Naive thymus-derived CD4-positive, alpha-beta T cell (primary cell): ENCODE measurements at regions of chr7 and their contacts with region 1.

Region 1: DNA sequence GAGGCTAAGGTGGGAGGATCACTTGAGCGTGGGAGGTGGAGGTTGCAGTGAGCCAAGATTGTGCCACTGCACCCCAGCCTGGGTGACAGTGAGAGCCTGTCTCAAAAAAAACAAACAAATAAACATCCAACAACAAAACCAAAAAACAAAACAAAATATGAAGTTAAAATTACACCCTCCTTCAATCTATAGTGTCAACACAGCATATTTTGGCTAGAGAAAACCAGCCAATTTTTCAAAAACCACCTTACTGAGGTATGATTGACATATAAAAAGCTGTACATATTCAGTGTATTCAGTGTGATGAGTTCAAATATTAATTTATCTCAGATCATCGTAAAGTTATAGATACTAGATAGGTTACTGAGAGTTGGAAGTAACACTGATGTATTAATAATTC is 102.4 kb downstream of the ICA1 start:
- DNase-seq: no peak
- ATAC-seq: no peak
- H3K4me3 ChIP-seq: no peak overlapping the region
- H3K4me3 Mint-ChIP-seq: no peak overlapping the region
- H3K27ac ChIP-seq: no peak overlapping the region
- H3K27ac Mint-ChIP-seq: no peak overlapping the region
- H3K4me1 ChIP-seq: no peaks in the 10 kb centered on the region
- H3K4me1 Mint-ChIP-seq: peaks cover 0 to 12% (median 3%) of the 10 kb centered on the region in 7 donors
- H3K27me3 ChIP-seq: no peaks in the 10 kb centered on the region
- H3K27me3 Mint-ChIP-seq: peaks cover 0 to 4% (median 0%) of the 10 kb centered on the region in 5 donors

Region 2: GRCh38 chr7:8042796-8043535 is 116.6 kb before region 1 on chr7:
- CTCF ChIA-PET with region 1: no interaction called
- POLR2A ChIA-PET with region 1: no interaction called
- intact Hi-C with region 1: no loop called
- DNase-seq: no peak
- ATAC-seq: no peak
- H3K4me3 ChIP-seq: no peak overlapping the region
- H3K4me3 Mint-ChIP-seq: no peak overlapping the region
- H3K27ac ChIP-seq: no peak overlapping the region
- H3K27ac Mint-ChIP-seq: peak overlapping the region in 4 of 9 donors; percentile 13 to 43 (median 34)
- H3K4me1 ChIP-seq: peaks cover 0 to 5% of the 10 kb centered on the region in 2 donors
- H3K4me1 Mint-ChIP-seq: peaks cover 25 to 61% (median 54%) of the 10 kb centered on the region in 7 donors
- H3K27me3 ChIP-seq: no peaks in the 10 kb centered on the region
- H3K27me3 Mint-ChIP-seq: no peaks in the 10 kb centered on the region

Region 3: DNA sequence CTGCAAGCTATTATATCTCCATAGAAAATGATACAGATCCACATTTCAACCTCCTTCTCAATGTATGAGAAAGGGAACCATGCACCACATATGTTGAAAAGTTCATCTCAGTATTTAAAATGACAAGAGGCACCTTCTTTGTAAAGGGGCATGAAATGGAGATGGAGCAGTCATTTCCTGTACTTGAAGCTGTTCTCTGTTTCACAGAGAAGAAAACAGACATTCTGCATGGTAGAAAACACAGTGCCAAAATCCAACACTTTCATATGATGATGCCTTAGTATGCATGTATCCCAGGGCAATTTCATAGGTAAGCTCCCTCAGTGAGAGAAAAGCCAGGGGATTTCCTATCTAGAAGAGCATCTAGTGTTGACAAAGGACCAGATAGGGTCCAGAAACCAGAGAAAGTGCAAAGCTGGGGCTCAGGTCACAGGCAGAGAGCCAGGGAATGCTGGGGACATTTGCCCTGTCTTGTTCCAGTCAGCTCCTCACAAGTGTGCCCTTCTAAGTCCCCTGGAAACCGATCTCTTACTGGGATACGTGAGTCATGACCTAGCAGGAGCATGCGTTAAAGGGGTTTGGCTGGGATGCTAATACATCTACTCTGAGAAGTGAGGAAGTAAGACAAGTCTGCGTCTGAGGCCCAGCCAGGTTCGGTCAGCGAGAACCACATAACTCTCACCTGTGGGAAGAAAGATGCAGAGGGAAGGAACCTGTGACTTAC is 16.3 kb before region 1 on chr7:
- CTCF ChIA-PET with region 1: interaction called, 4 read pairs
- POLR2A ChIA-PET with region 1: interaction called, 4 read pairs
- intact Hi-C with region 1: loop called in 1 of 2 experiments (anchors 2 kb)
- DNase-seq: peak in 1 of 9 donors; percentile 7
- ATAC-seq: peak; percentile 44
- H3K4me3 ChIP-seq: no peak overlapping the region
- H3K4me3 Mint-ChIP-seq: peak overlapping the region in 9 of 10 donors; percentile 8 to 69 (median 57)
- H3K27ac ChIP-seq: peak overlapping the region; percentile 33
- H3K27ac Mint-ChIP-seq: peak overlapping the region in 8 of 9 donors; percentile 78 to 92 (median 86)
- H3K4me1 ChIP-seq: peaks cover 0 to 11% of the 10 kb centered on the region in 2 donors
- H3K4me1 Mint-ChIP-seq: peaks cover 7 to 56% (median 49%) of the 10 kb centered on the region in 7 donors
- H3K27me3 ChIP-seq: no peaks in the 10 kb centered on the region
- H3K27me3 Mint-ChIP-seq: no peaks in the 10 kb centered on the region

Region 4: GRCh38 chr7:8325063-8325462 is 165.5 kb after region 1 on chr7:
- CTCF ChIA-PET with region 1: no interaction called
- POLR2A ChIA-PET with region 1: no interaction called
- intact Hi-C with region 1: no loop called
- DNase-seq: no peak
- ATAC-seq: no peak
- H3K4me3 ChIP-seq: no peak overlapping the region
- H3K4me3 Mint-ChIP-seq: no peak overlapping the region
- H3K27ac ChIP-seq: no peak overlapping the region
- H3K27ac Mint-ChIP-seq: no peak overlapping the region
- H3K4me1 ChIP-seq: no peaks in the 10 kb centered on the region
- H3K4me1 Mint-ChIP-seq: no peaks in the 10 kb centered on the region
- H3K27me3 ChIP-seq: no peaks in the 10 kb centered on the region
- H3K27me3 Mint-ChIP-seq: peaks cover 5 to 31% (median 29%) of the 10 kb centered on the region in 5 donors